Activated CD4-positive, alpha-beta memory T cell treated with anti-CD3 and anti-CD28 coated beads, Interleukin-2, amount 10 ng/mL, durations not matched to agents 7 days and 5 days (primary cell): ENCODE measurements at regions of chr3 and their contacts with region 1.

Region 1: GRCh38 chr3:151468284-151468917 is 7.5 kb upstream of the IGSF10 start:
- DNase-seq: no peak
- H3K4me3 Mint-ChIP-seq: no peak overlapping the region
- H3K27ac Mint-ChIP-seq: no peak overlapping the region
- H3K4me1 Mint-ChIP-seq: no peaks in the 10 kb centered on the region
- H3K27me3 Mint-ChIP-seq: peaks cover 23% of the 10 kb centered on the region

Region 2: DNA sequence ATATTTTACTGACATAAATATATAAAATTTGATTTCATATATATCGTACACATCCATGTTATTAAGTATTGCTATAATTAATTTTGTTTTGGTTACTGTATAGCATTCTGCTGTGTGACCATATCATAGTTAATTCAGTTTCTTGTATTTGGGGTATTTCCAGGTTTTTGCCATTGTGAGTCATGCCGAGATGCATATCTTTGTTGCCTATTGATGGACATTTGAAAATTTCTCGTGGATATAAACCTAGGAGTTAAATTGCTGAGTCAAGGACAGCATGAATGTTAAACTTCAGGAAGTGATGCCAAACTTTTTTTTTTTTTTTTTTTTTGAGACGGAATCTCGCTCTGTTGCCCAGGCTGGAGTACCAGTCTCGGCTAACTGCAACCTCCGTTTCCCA is 231.7 kb before region 1 on chr3:
- CTCF ChIA-PET with region 1: no interaction called
- POLR2A ChIA-PET with region 1: no interaction called
- DNase-seq: no peak
- H3K4me3 Mint-ChIP-seq: no peak overlapping the region
- H3K27ac Mint-ChIP-seq: no peak overlapping the region
- H3K4me1 Mint-ChIP-seq: no peaks in the 10 kb centered on the region
- H3K27me3 Mint-ChIP-seq: peaks cover 1% of the 10 kb centered on the region

Region 3: GRCh38 chr3:151813799-151814198 is 345.4 kb after region 1 on chr3 and contains the start of gene AADAC:
- CTCF ChIA-PET with region 1: no interaction called
- POLR2A ChIA-PET with region 1: no interaction called
- DNase-seq: no peak
- H3K4me3 Mint-ChIP-seq: no peak within 1 kb of the TSS
- H3K27ac Mint-ChIP-seq: no peak within 1 kb of the TSS
- H3K4me1 Mint-ChIP-seq: no peaks in the 10 kb centered on the region
- H3K27me3 Mint-ChIP-seq: peaks cover 22% of the 10 kb centered on the region
- total RNA-seq, gene AADAC: not detected

Region 4: DNA sequence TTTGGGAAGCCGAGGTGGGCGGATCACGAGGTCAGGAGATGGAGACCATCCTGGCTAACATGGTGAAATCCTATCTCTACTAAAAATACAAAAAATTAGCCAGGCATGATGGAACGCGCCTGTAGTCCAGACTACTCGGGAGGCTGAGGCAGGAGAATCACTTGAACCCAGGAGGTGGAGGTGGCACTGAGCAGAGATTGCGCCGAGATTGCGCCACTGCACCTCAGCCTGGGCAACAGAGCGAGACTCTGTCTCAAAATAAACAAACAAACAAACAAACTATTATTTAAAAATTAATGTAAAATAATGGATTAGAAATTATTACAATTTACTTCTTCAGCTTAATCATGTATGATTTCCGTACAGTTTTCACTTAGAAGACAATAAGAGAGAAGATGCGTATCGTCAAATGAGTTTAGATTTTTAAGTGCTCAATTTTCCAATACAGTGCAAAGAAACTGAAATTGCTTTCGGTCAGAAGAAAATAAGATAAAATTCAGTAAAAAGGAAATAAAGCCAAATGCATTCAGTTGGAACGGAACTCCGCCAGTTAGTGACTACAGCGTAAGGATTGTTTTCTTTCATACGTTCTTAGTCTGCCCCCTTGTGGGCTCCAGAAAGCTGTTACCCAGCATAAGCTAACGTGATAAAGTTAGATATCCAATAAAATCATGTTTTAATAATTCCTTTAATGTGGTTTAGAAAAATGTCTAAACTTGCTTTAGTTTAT is 370.3 kb after region 1 on chr3:
- CTCF ChIA-PET with region 1: interaction called, 11 read pairs
- POLR2A ChIA-PET with region 1: no interaction called
- DNase-seq: peak; percentile 33
- H3K4me3 Mint-ChIP-seq: no peak overlapping the region
- H3K27ac Mint-ChIP-seq: no peak overlapping the region
- H3K4me1 Mint-ChIP-seq: peaks cover 2% of the 10 kb centered on the region
- H3K27me3 Mint-ChIP-seq: peaks cover 26% of the 10 kb centered on the region

Region 5: GRCh38 chr3:151918253-151919029 is 450.0 kb after region 1 on chr3:
- CTCF ChIA-PET with region 1: interaction called, 14 read pairs
- POLR2A ChIA-PET with region 1: no interaction called
- DNase-seq: no peak
- H3K4me3 Mint-ChIP-seq: no peak overlapping the region
- H3K27ac Mint-ChIP-seq: no peak overlapping the region
- H3K4me1 Mint-ChIP-seq: no peaks in the 10 kb centered on the region
- H3K27me3 Mint-ChIP-seq: peaks cover 2% of the 10 kb centered on the region